ENCODE measurements at regions of chr17 and their contacts with region 1.

Region 1: DNA sequence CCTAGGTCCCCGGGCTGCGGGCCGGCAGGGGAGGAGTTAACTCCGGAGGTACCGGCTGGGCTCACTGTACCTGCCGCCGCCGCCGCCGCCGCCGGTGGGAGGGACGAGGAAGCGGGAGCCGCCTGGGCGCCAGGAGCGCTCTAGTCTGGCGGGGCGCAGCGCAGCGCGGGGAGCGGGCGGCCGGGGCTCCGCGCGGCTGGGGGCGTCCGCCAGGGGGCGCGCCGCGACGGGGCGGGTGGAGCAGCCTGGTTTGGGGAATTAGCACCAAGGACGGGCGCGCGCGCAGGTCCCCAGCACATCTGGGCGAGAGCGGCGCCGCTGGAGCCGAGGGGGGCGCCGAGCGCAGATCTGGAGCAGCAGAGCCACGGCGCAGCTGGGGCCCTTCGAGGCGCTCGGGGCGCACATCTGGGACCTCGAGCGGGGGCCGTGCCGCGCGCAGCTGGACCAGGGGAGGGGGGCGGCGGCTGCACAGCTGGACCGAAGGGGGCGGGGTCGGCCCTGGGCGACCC is at the start of gene NXPH3:
- DNase-seq: peak; percentile 83 to 87 (median 86)
- ATAC-seq: peak; percentile 89
- H3K4me3 ChIP-seq: peak within 1 kb of the TSS; percentile 54
- H3K27ac ChIP-seq: no peak within 1 kb of the TSS
- H3K4me1 ChIP-seq: peaks cover 8 to 55% of the 10 kb centered on the region in 2 experiments; a peak in 4 of 5 replicates
- H3K27me3 ChIP-seq: peaks cover 12 to 29% of the 10 kb centered on the region in 2 experiments; a peak in 4 of 5 replicates
- CTCF ChIP-seq: peak in 2 of 3 experiments; percentile 67 to 80; a peak in 5 of 6 replicates
- EP300 ChIP-seq: no peak
- POLR2A ChIP-seq: no peak
- RAD21 ChIP-seq: peak; percentile 38 to 77; a peak in 3 of 4 replicates
- polyA plus RNA-seq, gene NXPH3: not detected

Region 2: DNA sequence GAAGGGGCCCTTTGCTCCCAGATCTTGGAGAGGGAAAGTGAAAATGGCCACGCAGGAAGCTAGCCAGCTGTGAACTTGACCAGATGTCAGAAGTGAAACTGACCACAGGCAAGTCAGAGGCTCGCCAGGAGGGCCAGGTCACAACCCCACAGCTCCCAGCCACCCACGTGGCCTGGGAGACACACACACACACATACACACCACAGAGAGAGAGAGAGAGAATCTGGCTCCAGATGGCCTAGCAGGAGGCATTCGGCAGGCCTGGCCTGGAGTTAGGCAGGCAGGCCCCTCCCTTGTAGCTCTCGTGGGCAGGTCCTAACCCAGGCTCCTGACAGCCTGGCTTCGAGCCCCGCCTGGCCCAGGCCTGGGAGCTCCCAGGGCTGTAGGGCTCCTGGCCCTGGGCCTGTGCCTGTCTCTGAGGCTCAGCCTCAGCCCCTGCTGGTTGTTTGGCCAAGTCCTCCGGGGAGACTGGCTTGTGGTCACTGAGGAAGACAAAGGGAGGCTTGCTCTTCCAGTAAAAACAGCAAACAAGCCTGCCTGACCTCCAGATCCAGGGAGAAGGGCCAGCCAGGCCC is 60.4 kb before region 1 on chr17:
- CTCF ChIA-PET with region 1: no interaction called
- POLR2A ChIA-PET with region 1: no interaction called
- in situ Hi-C with region 1: no loop called
- intact Hi-C with region 1: no loop called
- DNase-seq: peak; percentile 72 to 80 (median 78)
- ATAC-seq: peak; percentile 91
- H3K4me3 ChIP-seq: no peak overlapping the region
- H3K27ac ChIP-seq: peak overlapping the region; percentile 49
- H3K4me1 ChIP-seq: peaks cover 14 to 27% of the 10 kb centered on the region in 2 experiments
- H3K27me3 ChIP-seq: peaks cover 0 to 18% of the 10 kb centered on the region in 2 experiments; a peak in 3 of 5 replicates
- CTCF ChIP-seq: no peak
- EP300 ChIP-seq: no peak
- POLR2A ChIP-seq: no peak
- RAD21 ChIP-seq: no peak

Region 3: GRCh38 chr17:49588726-49589576 is 13.3 kb after region 1 on chr17:
- CTCF ChIA-PET with region 1: no interaction called
- POLR2A ChIA-PET with region 1: no interaction called
- in situ Hi-C with region 1: no loop called
- intact Hi-C with region 1: no loop called
- DNase-seq: no peak
- ATAC-seq: no peak
- H3K4me3 ChIP-seq: no peak overlapping the region
- H3K27ac ChIP-seq: no peak overlapping the region
- H3K4me1 ChIP-seq: no peaks in the 10 kb centered on the region
- H3K27me3 ChIP-seq: no peaks in the 10 kb centered on the region
- CTCF ChIP-seq: no peak
- EP300 ChIP-seq: no peak
- POLR2A ChIP-seq: no peak
- RAD21 ChIP-seq: no peak

Region 4: DNA sequence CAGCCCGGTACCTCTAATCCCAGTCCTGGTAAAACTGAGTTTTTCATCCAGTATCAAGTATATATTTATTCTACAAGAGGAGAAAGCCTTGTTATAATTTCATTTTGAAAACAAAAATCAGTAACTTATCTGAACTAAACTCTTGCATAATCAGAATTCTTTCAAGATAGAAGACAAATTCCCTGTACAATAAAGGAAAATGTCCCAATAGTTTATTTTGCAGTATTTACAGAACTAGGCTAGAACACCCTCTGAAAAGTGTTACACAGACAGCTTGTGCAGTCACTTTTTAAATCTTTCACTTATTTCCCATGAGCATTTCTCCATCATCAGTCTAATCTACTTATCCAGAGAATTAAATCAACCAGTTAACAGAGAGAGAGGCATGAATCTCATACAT is 53.8 kb after region 1 on chr17:
- CTCF ChIA-PET with region 1: no interaction called
- POLR2A ChIA-PET with region 1: no interaction called
- in situ Hi-C with region 1: no loop called
- intact Hi-C with region 1: no loop called
- DNase-seq: no peak
- ATAC-seq: no peak
- H3K4me3 ChIP-seq: no peak overlapping the region
- H3K27ac ChIP-seq: no peak overlapping the region
- H3K4me1 ChIP-seq: no peaks in the 10 kb centered on the region
- H3K27me3 ChIP-seq: no peaks in the 10 kb centered on the region
- CTCF ChIP-seq: no peak
- EP300 ChIP-seq: no peak
- POLR2A ChIP-seq: no peak
- RAD21 ChIP-seq: no peak

Region 5: GRCh38 chr17:49694847-49695683 is 119.4 kb after region 1 on chr17:
- CTCF ChIA-PET with region 1: interaction called, 167 read pairs
- POLR2A ChIA-PET with region 1: interaction called, 5 read pairs
- in situ Hi-C with region 1: loop called (anchors 5 kb)
- intact Hi-C with region 1: loop called (anchors 1 kb)
- DNase-seq: peak; percentile 57 to 68 (median 60)
- ATAC-seq: peak; percentile 64
- H3K4me3 ChIP-seq: no peak overlapping the region
- H3K27ac ChIP-seq: no peak overlapping the region
- H3K4me1 ChIP-seq: peaks cover 0 to 4% of the 10 kb centered on the region in 2 experiments; a peak in 1 of 5 replicates
- H3K27me3 ChIP-seq: no peaks in the 10 kb centered on the region; a peak in 1 of 5 replicates
- CTCF ChIP-seq: peak; percentile 91 to 96 (median 92)
- EP300 ChIP-seq: no peak
- POLR2A ChIP-seq: no peak
- RAD21 ChIP-seq: peak; percentile 93 to 96

Region 6: GRCh38 chr17:49845321-49845720 is 269.7 kb after region 1 on chr17:
- CTCF ChIA-PET with region 1: interaction called, 5 read pairs
- POLR2A ChIA-PET with region 1: interaction called, 3 read pairs
- in situ Hi-C with region 1: loop called (anchors 5 kb)
- intact Hi-C with region 1: no loop called
- DNase-seq: no peak
- ATAC-seq: no peak
- H3K4me3 ChIP-seq: no peak overlapping the region
- H3K27ac ChIP-seq: no peak overlapping the region
- H3K4me1 ChIP-seq: peaks cover 0 to 5% of the 10 kb centered on the region in 2 experiments; a peak in 2 of 5 replicates
- H3K27me3 ChIP-seq: peaks cover 0 to 4% of the 10 kb centered on the region in 2 experiments; a peak in 1 of 5 replicates
- CTCF ChIP-seq: no peak
- EP300 ChIP-seq: no peak
- POLR2A ChIP-seq: no peak
- RAD21 ChIP-seq: no peak

Region 7: DNA sequence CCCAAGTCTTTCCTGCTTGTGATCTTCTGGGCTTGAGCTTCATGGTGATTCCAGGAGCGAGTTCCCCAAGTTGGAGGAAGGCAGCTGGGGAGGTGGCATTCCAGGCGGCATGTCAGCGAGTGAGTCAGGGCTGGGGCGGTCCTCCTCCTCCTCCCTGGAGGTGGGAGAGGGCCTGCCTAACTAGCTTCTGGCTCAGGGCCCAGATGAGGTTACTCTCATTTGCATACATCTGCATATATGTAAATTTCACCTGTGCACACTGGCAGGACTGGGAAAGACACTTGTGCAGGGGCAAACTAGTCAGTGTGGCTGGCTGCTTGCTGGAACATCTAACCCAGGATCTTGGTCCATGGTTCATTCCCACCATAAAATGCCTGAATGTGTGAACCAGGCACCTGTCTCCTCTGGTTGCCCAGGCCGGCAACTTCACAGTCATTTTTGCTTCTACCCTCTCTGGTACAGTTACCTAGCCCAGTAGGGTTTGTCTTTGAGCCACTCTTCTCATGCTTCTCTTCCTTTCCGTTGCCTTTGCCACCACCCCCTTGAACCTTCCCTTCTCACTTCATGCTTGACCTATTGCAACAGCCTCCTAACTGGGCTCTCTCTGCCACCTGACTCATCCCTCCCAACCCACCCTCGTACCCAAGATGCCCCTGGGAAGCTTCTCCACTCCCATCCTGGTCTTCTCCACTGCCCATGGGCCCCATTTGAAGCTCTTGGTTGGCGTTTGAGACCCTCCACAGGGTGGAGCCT is 383.7 kb after region 1 on chr17:
- CTCF ChIA-PET with region 1: no interaction called
- POLR2A ChIA-PET with region 1: no interaction called
- in situ Hi-C with region 1: no loop called
- intact Hi-C with region 1: no loop called
- DNase-seq: peak in 3 of 4 experiments; percentile 30 to 49 (median 44)
- ATAC-seq: peak; percentile 85
- H3K4me3 ChIP-seq: no peak overlapping the region
- H3K27ac ChIP-seq: no peak overlapping the region
- H3K4me1 ChIP-seq: peaks cover 0 to 4% of the 10 kb centered on the region in 2 experiments; a peak in 2 of 5 replicates
- H3K27me3 ChIP-seq: peaks cover 19 to 45% of the 10 kb centered on the region in 2 experiments
- CTCF ChIP-seq: no peak
- EP300 ChIP-seq: no peak
- POLR2A ChIP-seq: no peak
- RAD21 ChIP-seq: no peak

Measured in K562 (cell line).